Heart right ventricle (tissue), 16 donors: ENCODE measurements at regions of chr3 and their contacts with region 1.

Region 1: GRCh38 chr3:140736863-140737460 is 59.1 kb downstream of the TRIM42 start:
- DNase-seq: peak; percentile 40 to 67
- ATAC-seq: peak in 7 of 8 donors; percentile 58 to 74 (median 64)
- H3K4me3 ChIP-seq: no peak overlapping the region
- H3K27ac ChIP-seq: no peak overlapping the region
- H3K4me1 ChIP-seq: no peaks in the 10 kb centered on the region
- H3K27me3 ChIP-seq: peaks cover 0 to 14% (median 0%) of the 10 kb centered on the region in 7 donors
- CTCF ChIP-seq: peak; percentile 43 to 66 (median 58)

Region 2: DNA sequence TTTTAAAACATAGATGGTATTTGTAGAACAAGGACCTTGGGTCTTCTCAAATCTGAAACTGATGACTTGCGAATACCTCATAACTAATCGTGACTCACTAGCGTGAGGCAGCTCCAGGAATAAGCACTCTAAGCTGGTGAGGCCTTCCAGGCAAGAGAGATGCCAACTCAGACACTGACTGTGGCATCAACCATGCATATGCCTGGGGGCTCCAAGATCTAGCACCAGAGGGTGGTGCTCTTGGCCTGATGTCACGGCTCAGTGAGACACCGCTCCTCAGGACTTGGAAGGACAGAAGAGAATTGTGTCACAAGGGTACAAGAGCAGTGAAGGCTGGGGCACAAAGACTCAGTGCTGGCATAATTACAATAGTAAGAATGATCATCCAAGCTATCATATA is 184.1 kb before region 1 on chr3:
- intact Hi-C with region 1: loop called in 6 of 10 experiments (anchors 1 to 10 kb)
- DNase-seq: peak in 1 of 2 donors; percentile 21
- ATAC-seq: peak in 5 of 8 donors; percentile 38 to 89 (median 61)
- H3K4me3 ChIP-seq: no peak overlapping the region
- H3K27ac ChIP-seq: no peak overlapping the region
- H3K4me1 ChIP-seq: no peaks in the 10 kb centered on the region
- H3K27me3 ChIP-seq: no peaks in the 10 kb centered on the region
- CTCF ChIP-seq: peak in 5 of 9 donors; percentile 25 to 47 (median 31)

Region 3: DNA sequence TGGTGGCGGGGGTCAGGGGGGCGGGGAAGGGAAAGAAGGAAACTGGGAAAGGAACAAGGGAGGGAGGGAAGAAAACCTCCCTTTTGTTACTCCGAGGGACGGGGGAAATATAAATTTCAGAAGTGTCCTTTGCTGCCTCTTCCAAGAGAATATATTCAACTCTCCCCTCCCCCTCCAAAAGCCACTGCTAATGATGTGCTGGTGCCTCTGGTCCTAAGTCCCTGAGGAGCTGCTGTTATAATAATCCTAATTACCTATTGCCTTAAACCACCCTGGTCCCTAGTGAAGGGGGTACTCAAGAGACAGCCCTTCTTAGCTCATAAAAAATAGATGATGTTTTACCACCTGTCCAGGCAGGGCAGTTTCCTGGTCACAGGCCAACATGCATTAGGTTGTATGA is 177.4 kb before region 1 on chr3:
- intact Hi-C with region 1: loop called in 4 of 10 experiments (anchors 2 to 10 kb)
- DNase-seq: no peak
- ATAC-seq: no peak
- H3K4me3 ChIP-seq: no peak overlapping the region
- H3K27ac ChIP-seq: no peak overlapping the region
- H3K4me1 ChIP-seq: no peaks in the 10 kb centered on the region
- H3K27me3 ChIP-seq: no peaks in the 10 kb centered on the region
- CTCF ChIP-seq: no peak